ENCODE measurements at regions of chr7 and their contacts with region 1.

Region 1: DNA sequence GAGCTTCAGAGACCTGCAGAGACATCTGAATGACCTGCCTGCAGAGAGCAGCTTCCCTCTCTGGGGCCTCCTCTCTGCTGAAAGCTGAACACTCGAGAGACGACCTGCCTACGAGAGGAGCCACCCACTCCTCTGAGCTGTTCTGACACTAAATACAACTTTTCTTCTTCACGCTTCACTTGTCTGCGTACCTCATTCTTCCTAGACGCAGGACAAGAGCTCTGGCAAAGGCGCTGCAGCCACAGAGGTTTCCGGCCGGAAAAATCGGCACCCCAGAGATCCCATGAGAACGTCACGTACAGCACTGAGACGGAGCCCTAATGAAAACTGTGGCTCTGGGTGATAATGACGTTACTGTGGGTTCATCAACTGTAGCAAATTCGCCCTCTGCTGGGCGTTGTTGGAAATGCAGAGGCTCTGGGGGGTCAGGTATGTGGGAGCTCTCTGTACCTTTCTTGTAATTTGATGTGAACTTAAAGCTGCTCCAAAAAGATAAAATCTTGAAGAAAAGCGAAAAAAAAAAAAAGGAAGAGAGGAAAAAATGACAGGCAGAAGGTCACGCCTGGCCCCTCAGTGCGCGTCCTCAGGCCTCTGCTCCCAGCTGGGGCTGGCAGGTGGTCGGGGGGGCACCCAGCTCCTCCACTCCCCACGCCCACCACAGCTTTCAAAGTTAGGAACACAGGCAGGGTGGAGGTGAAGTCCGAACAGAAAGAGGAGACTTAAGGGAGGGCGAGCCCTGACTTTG is 120.7 kb downstream of the DYNC2I1 start:
- DNase-seq: peak; percentile 82 to 92 (median 86)
- ATAC-seq: peak; percentile 90
- H3K4me3 ChIP-seq: no peak overlapping the region
- H3K27ac ChIP-seq: peak overlapping the region in 1 of 4 donors; percentile 34
- H3K4me1 ChIP-seq: peaks cover 11% of the 10 kb centered on the region
- H3K27me3 ChIP-seq: no peaks in the 10 kb centered on the region
- CTCF ChIP-seq: peak; percentile 85 to 92 (median 88)
- POLR2A ChIP-seq: no peak

Region 2: GRCh38 chr7:158695726-158696452 is 281.1 kb before region 1 on chr7:
- intact Hi-C with region 1: loop called (anchors 10 kb)
- DNase-seq: peak; percentile 69 to 86 (median 76)
- ATAC-seq: peak; percentile 99
- H3K4me3 ChIP-seq: no peak overlapping the region
- H3K27ac ChIP-seq: peak overlapping the region in 2 of 4 donors; percentile 4 to 26
- H3K4me1 ChIP-seq: peaks cover 13% of the 10 kb centered on the region
- H3K27me3 ChIP-seq: no peaks in the 10 kb centered on the region
- CTCF ChIP-seq: peak; percentile 15 to 78 (median 66)
- POLR2A ChIP-seq: peak in 1 of 3 donors; percentile 10

Region 3: DNA sequence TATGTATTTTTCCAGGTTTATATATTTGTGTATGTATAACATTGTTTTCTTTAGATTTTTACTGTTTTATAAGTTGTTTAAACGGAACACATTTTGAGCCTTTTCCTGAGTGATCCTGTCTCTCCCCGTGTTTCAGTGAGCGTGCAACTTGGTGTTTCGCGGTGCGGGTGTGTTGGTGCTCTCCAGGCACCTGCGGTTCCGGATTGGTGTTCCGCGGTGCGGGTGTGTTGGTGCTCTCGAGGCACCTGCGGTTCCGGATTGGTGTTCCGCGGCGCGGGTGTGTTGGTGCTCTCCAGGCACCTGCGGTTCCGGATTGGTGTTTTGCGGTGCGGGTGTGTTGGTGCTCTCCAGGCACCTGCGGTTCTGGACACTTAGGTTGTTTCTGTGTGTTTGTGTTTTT is 100.0 kb before region 1 on chr7:
- intact Hi-C with region 1: loop called (anchors 5 kb)
- DNase-seq: no peak
- ATAC-seq: no peak
- H3K4me3 ChIP-seq: no peak overlapping the region
- H3K27ac ChIP-seq: no peak overlapping the region
- H3K4me1 ChIP-seq: no peaks in the 10 kb centered on the region
- H3K27me3 ChIP-seq: no peaks in the 10 kb centered on the region
- CTCF ChIP-seq: no peak
- POLR2A ChIP-seq: no peak

Region 4: GRCh38 chr7:158917818-158918217 is 59.2 kb before region 1 on chr7:
- intact Hi-C with region 1: no loop called
- DNase-seq: no peak
- ATAC-seq: no peak
- H3K4me3 ChIP-seq: no peak overlapping the region
- H3K27ac ChIP-seq: no peak overlapping the region
- H3K4me1 ChIP-seq: no peaks in the 10 kb centered on the region
- H3K27me3 ChIP-seq: no peaks in the 10 kb centered on the region
- CTCF ChIP-seq: no peak
- POLR2A ChIP-seq: no peak

Measured in body of pancreas (tissue), 4 donors.